ENCODE measurements at regions of chr5 and their contacts with region 1.

Region 1: GRCh38 chr5:71475788-71476384 is 20.4 kb downstream of the BDP1 start:
- DNase-seq: no peak
- H3K4me3 Mint-ChIP-seq: no peak overlapping the region
- H3K27ac Mint-ChIP-seq: peak overlapping the region; percentile 28
- H3K4me1 Mint-ChIP-seq: no peaks in the 10 kb centered on the region
- H3K27me3 Mint-ChIP-seq: no peaks in the 10 kb centered on the region

Region 2: GRCh38 chr5:71454913-71455312 is 21.0 kb before region 1 on chr5:
- CTCF ChIA-PET with region 1: no interaction called
- DNase-seq: no peak
- H3K4me3 Mint-ChIP-seq: peak overlapping the region; percentile 94
- H3K27ac Mint-ChIP-seq: peak overlapping the region; percentile 97
- H3K4me1 Mint-ChIP-seq: peaks cover 26% of the 10 kb centered on the region
- H3K27me3 Mint-ChIP-seq: peaks cover 26% of the 10 kb centered on the region

Region 3: DNA sequence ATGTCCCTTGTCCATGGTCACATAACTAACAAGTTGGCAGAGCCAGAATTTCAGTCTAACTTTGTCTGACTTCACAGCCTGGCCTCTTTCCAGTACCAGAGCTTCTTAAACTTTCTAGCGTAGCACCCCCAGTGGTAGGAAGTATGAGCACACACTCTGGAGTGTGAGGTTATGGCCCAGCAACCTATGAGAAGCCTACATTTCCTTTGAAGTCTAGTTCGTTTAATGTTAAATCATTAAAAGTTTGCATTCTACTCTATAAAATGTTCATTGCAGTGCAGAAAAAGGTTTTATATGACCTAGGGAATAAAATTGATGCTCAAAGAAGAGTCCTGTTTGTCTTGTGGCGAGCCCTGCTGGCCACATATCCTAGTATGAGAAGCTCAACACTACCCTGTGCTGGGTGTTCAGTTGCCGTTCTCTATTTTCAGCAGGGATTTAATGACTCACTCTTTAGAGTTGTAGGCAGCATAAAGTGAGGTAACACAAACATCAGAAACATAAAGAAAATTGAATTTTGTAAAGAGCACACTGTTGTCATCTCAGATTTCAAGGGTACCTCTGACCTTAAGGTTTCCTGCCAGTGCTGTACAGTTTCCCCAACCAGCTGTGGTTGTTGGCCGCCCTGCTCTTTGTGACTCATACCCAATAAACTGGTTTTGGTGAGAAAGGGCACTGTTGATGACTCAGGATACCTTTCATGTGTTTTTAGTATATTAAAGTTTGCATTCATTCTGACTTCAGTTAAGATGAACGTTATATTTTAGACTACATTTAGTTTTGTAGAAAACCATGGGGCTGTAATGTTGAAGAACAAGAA is 125.5 kb after region 1 on chr5:
- CTCF ChIA-PET with region 1: interaction called, 15 read pairs
- DNase-seq: peak; percentile 73
- H3K4me3 Mint-ChIP-seq: no peak overlapping the region
- H3K27ac Mint-ChIP-seq: peak overlapping the region; percentile 92
- H3K4me1 Mint-ChIP-seq: peaks cover 32% of the 10 kb centered on the region
- H3K27me3 Mint-ChIP-seq: no peaks in the 10 kb centered on the region

Region 4: DNA sequence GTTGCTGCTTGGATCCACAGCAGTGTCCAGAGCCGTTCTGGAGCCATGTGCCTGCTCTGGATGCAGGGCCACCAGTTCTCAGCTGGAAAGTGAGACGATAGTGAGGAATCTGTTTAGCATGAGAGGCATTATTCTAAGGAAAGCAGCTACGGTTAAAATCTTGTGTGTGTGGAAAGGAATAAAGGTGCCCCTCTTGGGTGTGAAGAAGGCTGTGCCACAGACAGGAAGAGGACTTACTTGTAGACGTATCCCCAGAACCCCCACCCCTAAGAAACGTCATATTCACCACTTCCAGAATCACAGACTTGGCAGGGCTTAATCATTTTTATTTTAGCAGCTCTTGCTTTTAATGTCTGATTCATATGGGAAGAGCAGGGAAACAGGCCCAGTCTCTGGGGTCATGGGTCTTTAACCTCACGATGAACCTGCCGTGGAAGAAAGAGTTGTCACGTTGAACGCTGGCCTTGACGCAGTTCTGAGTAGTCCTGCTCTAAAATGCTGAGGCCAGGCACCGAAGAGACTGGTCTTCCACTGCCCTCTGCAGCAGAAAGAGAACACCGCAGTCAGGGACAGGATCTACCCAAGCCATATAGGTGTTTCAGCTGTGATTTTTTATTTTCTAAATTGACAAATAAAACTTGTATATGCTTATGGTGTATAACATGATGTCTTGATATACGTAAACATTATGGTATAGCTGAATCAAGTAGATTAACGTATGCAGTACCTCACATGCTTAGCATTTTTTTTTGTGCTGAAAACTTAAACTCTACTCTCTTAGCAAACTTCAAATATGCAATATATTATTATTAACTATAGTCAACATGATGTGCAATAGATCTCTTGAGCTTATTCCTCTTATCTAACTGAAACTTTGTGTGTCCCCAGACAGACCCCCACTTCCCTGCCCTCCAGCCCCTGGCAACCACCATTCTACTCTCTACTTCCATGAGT is 282.0 kb after region 1 on chr5:
- CTCF ChIA-PET with region 1: interaction called, 41 read pairs
- DNase-seq: peak; percentile 60
- H3K4me3 Mint-ChIP-seq: peak overlapping the region; percentile 7
- H3K27ac Mint-ChIP-seq: no peak overlapping the region
- H3K4me1 Mint-ChIP-seq: peaks cover 8% of the 10 kb centered on the region
- H3K27me3 Mint-ChIP-seq: no peaks in the 10 kb centered on the region

Region 5: DNA sequence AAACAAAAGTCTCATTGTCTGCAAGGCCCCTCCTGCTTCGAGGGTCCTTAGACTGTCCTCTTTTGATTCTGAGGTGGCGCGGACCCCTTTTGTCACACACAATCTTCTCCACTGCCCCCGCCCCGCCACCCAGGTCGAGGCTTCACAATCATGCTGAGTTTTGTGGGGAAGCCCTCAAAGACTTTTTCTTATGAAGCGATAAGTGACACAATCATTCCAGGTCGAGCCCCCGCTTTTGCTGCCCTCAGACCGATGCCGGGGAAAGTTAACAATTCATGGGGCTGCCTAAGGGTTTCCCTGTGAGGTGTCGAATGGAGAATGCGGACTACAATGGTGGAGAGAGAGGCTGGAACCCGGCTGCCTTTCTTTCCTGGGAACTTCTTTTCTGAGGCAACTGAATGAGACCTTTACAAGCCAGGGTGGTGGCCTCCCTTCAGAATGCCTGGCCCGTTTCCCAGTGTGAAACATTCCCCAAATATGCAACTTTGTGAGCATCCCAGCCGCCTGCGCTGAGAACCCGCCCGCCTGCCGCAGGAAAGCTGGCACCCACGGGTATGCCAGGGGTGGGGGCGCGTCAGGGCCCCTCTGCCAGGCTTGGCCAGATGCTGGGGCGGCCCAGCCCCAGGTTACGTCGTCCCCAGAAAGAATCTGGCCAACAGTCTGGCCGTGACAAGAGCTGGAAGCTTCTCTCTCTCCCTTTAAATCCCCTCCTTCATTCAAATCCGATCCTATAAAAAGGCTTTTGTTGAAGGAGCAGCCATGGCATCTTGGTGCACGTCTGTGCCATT is 703.3 kb after region 1 on chr5:
- CTCF ChIA-PET with region 1: no interaction called
- DNase-seq: no peak
- H3K4me3 Mint-ChIP-seq: no peak overlapping the region
- H3K27ac Mint-ChIP-seq: no peak overlapping the region
- H3K4me1 Mint-ChIP-seq: no peaks in the 10 kb centered on the region
- H3K27me3 Mint-ChIP-seq: peaks cover 62% of the 10 kb centered on the region

Measured in activated naive CD4-positive, alpha-beta T cell treated with anti-CD3 and anti-CD28 coated beads, Interleukin-2, amount 10 ng/mL, durations not matched to agents 7 days and 5 days (primary cell).